ENCODE measurements at regions of chr11 and their contacts with region 1.

Region 1: GRCh38 chr11:12599408-12600143 is 74.6 kb upstream of the TEAD1 start:
- DNase-seq: peak; percentile 55 to 67
- H3K4me3 ChIP-seq: no peak overlapping the region
- H3K4me3 Mint-ChIP-seq: no peak overlapping the region
- H3K27ac Mint-ChIP-seq: no peak overlapping the region
- H3K4me1 ChIP-seq: peaks cover 8% of the 10 kb centered on the region
- H3K4me1 Mint-ChIP-seq: peaks cover 10% of the 10 kb centered on the region
- H3K27me3 ChIP-seq: no peaks in the 10 kb centered on the region
- H3K27me3 Mint-ChIP-seq: no peaks in the 10 kb centered on the region
- CTCF ChIP-seq: peak; percentile 48 to 52

Region 2: GRCh38 chr11:12556788-12557384 is 42.7 kb before region 1 on chr11:
- CTCF ChIA-PET with region 1: no interaction called
- POLR2A ChIA-PET with region 1: no interaction called
- intact Hi-C with region 1: no loop called
- DNase-seq: no peak
- H3K4me3 ChIP-seq: no peak overlapping the region
- H3K4me3 Mint-ChIP-seq: no peak overlapping the region
- H3K27ac Mint-ChIP-seq: no peak overlapping the region
- H3K4me1 ChIP-seq: no peaks in the 10 kb centered on the region; the same call in 1 of the 2 replicates
- H3K4me1 Mint-ChIP-seq: peaks cover 16% of the 10 kb centered on the region
- H3K27me3 ChIP-seq: no peaks in the 10 kb centered on the region
- H3K27me3 Mint-ChIP-seq: peaks cover 7% of the 10 kb centered on the region
- CTCF ChIP-seq: no peak

Region 3: DNA sequence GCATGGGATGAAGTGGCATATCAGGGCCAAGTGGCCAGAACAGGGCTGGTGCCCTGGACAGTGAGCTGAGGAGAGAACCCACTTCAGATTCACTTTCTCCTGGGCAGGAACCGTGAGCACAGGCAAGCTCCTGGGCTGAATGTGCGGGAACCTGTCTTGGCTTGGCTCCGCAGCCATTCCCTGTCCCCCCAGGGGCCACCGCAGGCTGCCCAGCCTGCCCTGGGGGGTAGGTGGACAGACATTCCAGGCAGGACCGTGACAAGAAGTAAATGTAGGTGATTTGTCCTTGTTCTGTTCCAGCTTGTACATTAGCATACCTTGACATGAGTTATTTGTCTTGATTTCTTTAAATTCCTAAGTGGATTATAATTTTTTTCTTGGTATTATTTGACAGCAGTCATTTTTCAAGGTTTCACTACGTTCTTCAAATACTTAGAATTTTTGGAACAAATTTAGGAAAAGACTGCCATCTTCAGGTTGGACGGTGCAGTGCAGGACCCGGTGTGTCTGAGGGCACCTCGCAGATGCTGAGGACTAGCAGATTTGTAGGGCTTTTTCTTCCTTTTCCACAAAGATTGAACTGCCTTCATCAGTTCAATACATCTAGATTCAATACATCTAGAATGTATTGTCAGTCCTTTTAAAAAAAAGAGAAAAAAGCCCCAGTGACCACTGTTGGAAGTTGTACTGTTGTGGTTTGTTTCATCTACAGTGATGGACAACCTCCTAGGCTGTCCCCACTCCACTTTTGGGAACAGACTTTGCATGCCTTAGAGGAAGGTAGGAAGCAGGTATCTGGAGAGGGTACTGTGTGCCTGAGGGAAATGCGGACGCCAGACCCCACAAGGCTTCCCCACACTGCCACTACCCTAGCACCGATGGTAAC is 294.5 kb after region 1 on chr11:
- CTCF ChIA-PET with region 1: interaction called, 5 read pairs
- POLR2A ChIA-PET with region 1: no interaction called
- intact Hi-C with region 1: loop called (anchors 1 kb)
- DNase-seq: peak; percentile 61 to 81
- H3K4me3 ChIP-seq: no peak overlapping the region
- H3K4me3 Mint-ChIP-seq: no peak overlapping the region
- H3K27ac Mint-ChIP-seq: peak overlapping the region; percentile 57
- H3K4me1 ChIP-seq: peaks cover 10% of the 10 kb centered on the region
- H3K4me1 Mint-ChIP-seq: peaks cover 4% of the 10 kb centered on the region
- H3K27me3 ChIP-seq: no peaks in the 10 kb centered on the region
- H3K27me3 Mint-ChIP-seq: no peaks in the 10 kb centered on the region
- CTCF ChIP-seq: peak; percentile 79 to 84

Measured in Caco-2 (cell line).